ENCODE measurements at regions of chr3 and their contacts with region 1.

Region 1: DNA sequence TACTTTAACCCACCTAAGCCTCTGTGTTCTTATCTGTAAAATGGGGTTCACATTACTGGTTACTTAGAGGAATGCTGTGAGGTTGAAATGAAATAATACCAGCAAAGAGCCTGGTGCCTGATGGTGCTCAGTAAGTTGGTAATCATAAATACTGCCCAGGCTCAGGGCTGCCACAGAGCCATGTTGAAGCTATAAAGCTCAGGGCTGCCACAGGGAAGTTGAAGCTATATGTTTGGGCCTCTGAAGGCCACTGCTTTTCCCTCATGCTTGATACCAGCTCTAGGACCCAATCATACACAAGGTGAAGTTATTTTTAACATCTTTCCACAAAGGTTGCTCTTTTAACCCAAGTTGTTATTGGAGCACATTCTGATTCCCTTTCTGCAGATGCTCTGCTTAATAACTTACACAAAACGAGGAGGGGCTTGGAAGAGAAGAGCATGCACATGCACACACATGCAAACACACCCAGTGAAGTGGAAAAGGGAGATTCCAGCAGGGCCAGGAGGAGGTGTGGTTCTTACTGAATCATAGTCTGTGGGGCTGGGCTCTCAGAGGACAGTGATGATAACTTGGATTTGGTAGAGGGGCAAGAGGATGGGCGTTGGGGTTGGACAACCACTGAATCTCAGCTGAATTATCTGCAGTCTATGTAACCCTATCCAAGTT is 17.4 kb downstream of the PARP14 start:
- DNase-seq: peak; percentile 89
- ATAC-seq: peak; percentile 96
- H3K4me3 ChIP-seq: peak overlapping the region in 1 of 5 experiments; percentile 48
- H3K4me3 Mint-ChIP-seq: peak overlapping the region; percentile 59
- H3K27ac ChIP-seq: peak overlapping the region; percentile 84 to 95
- H3K27ac Mint-ChIP-seq: peak overlapping the region; percentile 88
- H3K4me1 ChIP-seq: peaks cover 78 to 83% of the 10 kb centered on the region in 2 donors
- H3K4me1 Mint-ChIP-seq: peaks cover 85% of the 10 kb centered on the region
- H3K27me3 ChIP-seq: no peaks in the 10 kb centered on the region
- H3K27me3 Mint-ChIP-seq: no peaks in the 10 kb centered on the region
- CTCF ChIP-seq: no peak

Region 2: GRCh38 chr3:122621112-122621511 is 77.0 kb before region 1 on chr3:
- CTCF ChIA-PET with region 1: interaction called, 5 read pairs
- POLR2A ChIA-PET with region 1: no interaction called
- intact Hi-C with region 1: loop called (anchors 5 kb)
- DNase-seq: peak; percentile 56
- ATAC-seq: peak; percentile 39
- H3K4me3 ChIP-seq: no peak overlapping the region
- H3K4me3 Mint-ChIP-seq: peak overlapping the region; percentile 69
- H3K27ac ChIP-seq: peak overlapping the region; percentile 52 to 77
- H3K27ac Mint-ChIP-seq: peak overlapping the region; percentile 92
- H3K4me1 ChIP-seq: peaks cover 36 to 63% of the 10 kb centered on the region in 2 donors
- H3K4me1 Mint-ChIP-seq: peaks cover 67% of the 10 kb centered on the region
- H3K27me3 ChIP-seq: no peaks in the 10 kb centered on the region
- H3K27me3 Mint-ChIP-seq: no peaks in the 10 kb centered on the region
- CTCF ChIP-seq: no peak

Region 3: GRCh38 chr3:122719273-122719921 is 21.3 kb after region 1 on chr3:
- CTCF ChIA-PET with region 1: interaction called, 3 read pairs
- POLR2A ChIA-PET with region 1: interaction called, 7 read pairs
- intact Hi-C with region 1: loop called (anchors 1 kb)
- DNase-seq: no peak
- ATAC-seq: no peak
- H3K4me3 ChIP-seq: no peak overlapping the region
- H3K4me3 Mint-ChIP-seq: no peak overlapping the region
- H3K27ac ChIP-seq: peak overlapping the region in 1 of 2 donors; percentile 86
- H3K27ac Mint-ChIP-seq: peak overlapping the region; percentile 79
- H3K4me1 ChIP-seq: peaks cover 11 to 19% of the 10 kb centered on the region in 2 donors
- H3K4me1 Mint-ChIP-seq: peaks cover 23% of the 10 kb centered on the region
- H3K27me3 ChIP-seq: no peaks in the 10 kb centered on the region
- H3K27me3 Mint-ChIP-seq: no peaks in the 10 kb centered on the region
- CTCF ChIP-seq: no peak

Measured in B cell (primary cell).